ENCODE measurements at regions of chrX and their contacts with region 1.

Region 1: GRCh38 chrX:38561126-38561868 is at the start of gene TSPAN7:
- DNase-seq: peak; percentile 82 to 84
- ATAC-seq: peak; percentile 93 to 96 (median 95)
- H3K4me3 ChIP-seq: peak within 1 kb of the TSS; percentile 47 to 65 (median 59)
- H3K27ac ChIP-seq: peak within 1 kb of the TSS in 7 of 10 donors; percentile 35 to 69 (median 48)
- H3K4me1 ChIP-seq: peaks cover 0 to 16% (median 0%) of the 10 kb centered on the region in 9 donors
- H3K27me3 ChIP-seq: peaks cover 0 to 9% (median 0%) of the 10 kb centered on the region in 7 donors
- CTCF ChIP-seq: no peak
- total RNA-seq, gene TSPAN7: 11.1 to 45.1 (median 19.1) TPM

Region 2: DNA sequence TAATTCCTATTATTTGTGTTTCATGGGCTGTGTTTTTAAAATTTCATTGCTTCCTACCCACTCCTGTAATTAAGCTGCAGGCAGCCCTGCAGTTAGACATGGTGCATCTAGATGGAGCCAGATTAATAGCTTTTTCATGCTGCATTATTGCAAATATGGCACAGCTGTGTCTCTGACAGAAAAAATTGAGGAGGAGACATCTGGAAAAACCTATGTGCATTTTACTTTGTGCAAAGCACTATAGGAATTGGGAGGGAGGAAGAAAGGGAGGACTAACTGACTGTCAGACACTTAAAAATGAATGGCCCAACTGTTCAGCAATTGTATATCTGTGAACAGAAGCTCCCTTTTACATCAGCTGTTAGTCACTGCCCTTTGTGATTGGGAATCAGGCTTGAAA is 225.9 kb before region 1 on chrX:
- intact Hi-C with region 1: loop called in 1 of 10 experiments (anchors 10 kb)
- DNase-seq: no peak
- ATAC-seq: no peak
- H3K4me3 ChIP-seq: no peak overlapping the region
- H3K27ac ChIP-seq: no peak overlapping the region
- H3K4me1 ChIP-seq: peaks cover 0 to 8% (median 0%) of the 10 kb centered on the region in 9 donors
- H3K27me3 ChIP-seq: peaks cover 0 to 7% (median 0%) of the 10 kb centered on the region in 7 donors
- CTCF ChIP-seq: peak in 8 of 9 donors; percentile 16 to 53 (median 28)